ENCODE measurements at regions of chr13 and their contacts with region 1.

Region 1: DNA sequence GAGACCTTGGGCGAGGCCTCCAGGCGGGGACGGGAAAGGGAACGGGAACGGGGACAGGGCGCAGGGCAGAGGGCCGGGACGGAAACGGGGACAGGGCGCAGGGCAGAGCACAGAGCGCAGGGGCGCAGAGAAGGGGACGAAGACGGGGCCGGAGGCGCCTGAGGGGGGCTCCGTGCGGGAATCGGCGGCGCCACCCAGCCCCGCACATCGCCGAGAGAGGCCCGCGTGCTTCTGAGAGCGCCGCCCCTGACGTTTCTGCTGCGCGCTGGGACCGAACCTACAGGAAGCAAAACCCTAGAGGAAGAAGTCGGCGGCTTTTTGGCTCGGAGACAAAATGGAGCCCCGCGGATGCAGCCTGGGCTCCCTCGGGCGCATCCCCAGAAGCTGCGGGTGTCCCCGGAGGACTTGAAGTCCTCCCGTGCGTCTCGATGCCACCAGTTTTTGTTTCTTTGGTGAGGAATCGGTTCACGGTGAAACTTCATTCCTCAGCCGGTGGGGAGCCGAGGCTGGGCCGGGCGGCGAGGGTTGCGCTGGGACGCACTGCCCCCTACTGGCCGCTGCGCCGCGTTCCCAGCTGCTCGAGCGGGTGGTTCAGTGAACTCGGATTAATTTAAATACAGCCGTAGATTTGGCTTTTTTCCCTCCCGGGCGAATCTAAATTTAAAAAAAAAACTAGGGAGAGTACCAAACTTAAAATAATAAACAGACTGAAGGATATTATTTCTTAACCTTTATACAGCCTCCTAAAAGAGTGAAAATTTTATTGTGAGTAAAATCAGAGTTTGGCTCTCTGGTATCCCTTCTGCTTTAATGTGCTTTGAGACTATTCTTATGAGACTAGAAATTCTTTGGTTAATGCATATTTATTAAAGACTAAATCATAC is 350.0 kb upstream of the ARGLU1 start:
- DNase-seq: peak; percentile 42 to 89 (median 73)
- H3K4me3 ChIP-seq: peak overlapping the region; percentile 41 to 91 (median 74)
- H3K27ac ChIP-seq: peak overlapping the region; percentile 58 to 97 (median 88)
- H3K27me3 ChIP-seq: no peaks in the 10 kb centered on the region
- CTCF ChIP-seq: peak; percentile 85 to 99 (median 95)

Region 2: GRCh38 chr13:106567474-106568298 is 350.2 kb before region 1 on chr13 and contains the start of gene ARGLU1:
- intact Hi-C with region 1: loop called in 1 of 2 experiments (anchors 10 kb)
- DNase-seq: peak; percentile 80 to 94 (median 90)
- H3K4me3 ChIP-seq: peak within 1 kb of the TSS; percentile 56 to 97 (median 87)
- H3K27ac ChIP-seq: peak within 1 kb of the TSS; percentile 81 to 100 (median 97)
- H3K27me3 ChIP-seq: no peaks in the 10 kb centered on the region
- CTCF ChIP-seq: peak in 36 of 56 donors; percentile 5 to 51 (median 28)
- total RNA-seq, gene ARGLU1: 101 to 209 (median 139) TPM

Region 3: DNA sequence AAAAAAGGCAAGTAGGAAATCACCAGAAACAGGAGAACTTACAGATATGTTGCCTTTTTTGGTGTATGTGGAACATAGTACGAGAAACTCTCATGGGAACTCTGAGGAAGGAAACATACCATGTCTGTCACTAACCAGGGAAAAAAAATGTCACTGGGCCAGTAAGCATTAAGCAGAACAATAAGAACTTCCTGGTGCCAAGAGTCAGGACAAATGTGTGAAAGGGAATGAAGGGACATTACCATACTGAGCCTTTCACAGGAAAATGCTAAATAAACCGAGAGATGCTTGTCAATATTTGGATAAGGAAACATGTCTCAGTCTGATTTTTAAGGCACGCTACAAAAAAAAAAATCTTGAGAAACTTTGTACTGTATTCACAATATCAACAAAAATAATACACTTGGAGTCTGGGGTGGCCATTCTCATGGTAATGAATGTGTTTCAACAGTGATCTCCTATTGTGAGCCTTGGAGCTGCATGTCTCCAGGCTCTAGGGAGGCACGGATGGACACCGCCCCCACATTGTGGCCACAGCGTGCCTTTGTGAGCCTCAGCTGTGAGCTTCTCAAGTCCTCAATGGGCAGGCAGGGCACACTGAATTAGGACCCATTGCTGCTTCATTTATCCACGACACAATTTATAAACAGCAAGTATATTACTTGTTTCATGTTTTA is 237.0 kb before region 1 on chr13:
- intact Hi-C with region 1: loop called (anchors 10 kb)
- DNase-seq: peak in 8 of 10 donors; percentile 45 to 73 (median 57)
- H3K4me3 ChIP-seq: peak overlapping the region in 21 of 59 donors; percentile 0 to 28 (median 16)
- H3K27ac ChIP-seq: peak overlapping the region in 40 of 59 donors; percentile 0 to 78 (median 55)
- H3K27me3 ChIP-seq: no peaks in the 10 kb centered on the region
- CTCF ChIP-seq: peak in 4 of 56 donors; percentile 9 to 28 (median 16)

Region 4: GRCh38 chr13:106710273-106710672 is 207.6 kb before region 1 on chr13:
- intact Hi-C with region 1: loop called in 1 of 2 experiments (anchors 10 kb)
- DNase-seq: peak in 1 of 10 donors; percentile 22
- H3K4me3 ChIP-seq: peak overlapping the region in 57 of 59 donors; percentile 5 to 58 (median 39)
- H3K27ac ChIP-seq: peak overlapping the region in 35 of 59 donors; percentile 7 to 80 (median 41)
- H3K27me3 ChIP-seq: no peaks in the 10 kb centered on the region
- CTCF ChIP-seq: no peak

Region 5: GRCh38 chr13:106819413-106820155 is 98.3 kb before region 1 on chr13:
- intact Hi-C with region 1: no loop called
- DNase-seq: no peak
- H3K4me3 ChIP-seq: no peak overlapping the region
- H3K27ac ChIP-seq: no peak overlapping the region
- H3K27me3 ChIP-seq: no peaks in the 10 kb centered on the region
- CTCF ChIP-seq: no peak

Region 6: GRCh38 chr13:107079423-107080049 is 161.6 kb after region 1 on chr13:
- intact Hi-C with region 1: no loop called
- DNase-seq: no peak
- H3K4me3 ChIP-seq: no peak overlapping the region
- H3K27ac ChIP-seq: no peak overlapping the region
- H3K27me3 ChIP-seq: no peaks in the 10 kb centered on the region
- CTCF ChIP-seq: no peak

Region 7: GRCh38 chr13:107117327-107118012 is 199.6 kb after region 1 on chr13:
- intact Hi-C with region 1: loop called in 1 of 2 experiments (anchors 10 kb)
- DNase-seq: no peak
- H3K4me3 ChIP-seq: no peak overlapping the region
- H3K27ac ChIP-seq: no peak overlapping the region
- H3K27me3 ChIP-seq: peaks cover 0 to 9% (median 0%) of the 10 kb centered on the region in 45 donors
- CTCF ChIP-seq: no peak